CD8-positive, alpha-beta memory T cell (primary cell): ENCODE measurements at regions of chr11 and their contacts with region 1.

Region 1: GRCh38 chr11:655036-655726 is 18.1 kb downstream of the DRD4 start:
- DNase-seq: no peak
- H3K4me3 ChIP-seq: no peak overlapping the region
- H3K4me3 Mint-ChIP-seq: no peak overlapping the region
- H3K27ac ChIP-seq: no peak overlapping the region
- H3K27ac Mint-ChIP-seq: no peak overlapping the region
- H3K4me1 ChIP-seq: no peaks in the 10 kb centered on the region
- H3K4me1 Mint-ChIP-seq: no peaks in the 10 kb centered on the region
- H3K27me3 ChIP-seq: no peaks in the 10 kb centered on the region
- H3K27me3 Mint-ChIP-seq: no peaks in the 10 kb centered on the region

Region 2: GRCh38 chr11:375065-376025 is 279.8 kb before region 1 on chr11:
- CTCF ChIA-PET with region 1: no interaction called
- POLR2A ChIA-PET with region 1: interaction called, 11 read pairs
- DNase-seq: no peak
- H3K4me3 ChIP-seq: no peak overlapping the region
- H3K4me3 Mint-ChIP-seq: no peak overlapping the region
- H3K27ac ChIP-seq: no peak overlapping the region
- H3K27ac Mint-ChIP-seq: no peak overlapping the region
- H3K4me1 ChIP-seq: no peaks in the 10 kb centered on the region
- H3K4me1 Mint-ChIP-seq: peaks cover 0 to 3% (median 2%) of the 10 kb centered on the region in 3 donors
- H3K27me3 ChIP-seq: no peaks in the 10 kb centered on the region
- H3K27me3 Mint-ChIP-seq: peaks cover 12% of the 10 kb centered on the region in 2 donors